ENCODE measurements at regions of chr19 and their contacts with region 1.

Region 1: DNA sequence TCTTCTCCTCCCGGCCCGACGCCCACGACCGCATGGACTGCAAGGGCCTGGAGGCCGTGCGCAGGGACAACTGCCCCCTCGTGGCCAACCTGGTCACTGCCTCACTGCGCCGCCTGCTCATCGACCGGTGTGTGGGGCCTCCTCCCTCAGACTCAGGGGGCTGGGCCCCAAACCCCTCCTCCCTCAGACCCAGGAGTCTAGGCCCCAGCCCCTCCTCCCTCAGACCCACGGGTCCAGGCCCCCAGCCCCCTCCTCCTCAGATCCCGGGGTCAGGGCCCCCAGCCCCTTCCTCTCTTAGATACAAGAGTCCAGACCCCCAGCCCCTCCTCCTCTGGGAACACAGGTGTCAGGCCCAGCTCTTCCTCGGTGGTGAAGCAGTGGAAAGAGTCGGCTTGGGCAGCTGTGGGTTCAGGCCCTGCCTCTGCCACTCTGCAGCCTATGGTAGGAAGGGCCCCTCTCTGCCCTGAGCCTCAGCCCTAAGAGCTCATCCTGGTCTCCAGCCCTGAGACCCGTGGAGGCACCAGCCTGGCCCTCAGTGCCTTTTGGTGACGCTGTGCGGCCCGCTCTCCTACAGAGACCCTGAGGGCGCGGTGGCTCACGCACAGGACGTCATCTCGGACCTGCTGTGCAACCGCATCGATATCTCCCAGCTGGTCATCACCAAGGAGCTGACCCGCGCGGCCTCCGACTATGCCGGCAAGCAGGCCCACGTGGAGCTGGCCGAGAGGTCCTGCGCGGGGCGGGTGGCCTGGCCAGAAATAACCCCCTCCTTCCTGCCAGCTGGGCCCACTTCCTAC is 3.7 kb upstream of the SPIB start:
- DNase-seq: peak; percentile 95
- ATAC-seq: peak; percentile 83
- H3K4me3 Mint-ChIP-seq: no peak overlapping the region
- H3K27ac Mint-ChIP-seq: no peak overlapping the region
- H3K4me1 Mint-ChIP-seq: peaks cover 18% of the 10 kb centered on the region
- H3K27me3 Mint-ChIP-seq: no peaks in the 10 kb centered on the region; the same call in 1 of the 2 replicates
- CTCF ChIP-seq: peak; percentile 93

Region 2: DNA sequence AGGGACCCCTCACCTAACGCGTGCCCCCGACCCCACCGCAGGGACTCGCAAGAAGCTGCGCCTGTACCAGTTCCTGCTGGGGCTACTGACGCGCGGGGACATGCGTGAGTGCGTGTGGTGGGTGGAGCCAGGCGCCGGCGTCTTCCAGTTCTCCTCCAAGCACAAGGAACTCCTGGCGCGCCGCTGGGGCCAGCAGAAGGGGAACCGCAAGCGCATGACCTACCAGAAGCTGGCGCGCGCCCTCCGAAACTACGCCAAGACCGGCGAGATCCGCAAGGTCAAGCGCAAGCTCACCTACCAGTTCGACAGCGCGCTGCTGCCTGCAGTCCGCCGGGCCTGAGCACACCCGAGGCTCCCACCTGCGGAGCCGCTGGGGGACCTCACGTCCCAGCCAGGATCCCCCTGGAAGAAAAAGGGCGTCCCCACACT is 12.9 kb after region 1 on chr19:
- CTCF ChIA-PET with region 1: interaction called, 16 read pairs
- POLR2A ChIA-PET with region 1: interaction called, 5 read pairs
- DNase-seq: peak; percentile 81
- ATAC-seq: peak; percentile 31
- H3K4me3 Mint-ChIP-seq: peak overlapping the region; percentile 47
- H3K27ac Mint-ChIP-seq: no peak overlapping the region
- H3K4me1 Mint-ChIP-seq: peaks cover 21% of the 10 kb centered on the region
- H3K27me3 Mint-ChIP-seq: peaks cover 35% of the 10 kb centered on the region
- CTCF ChIP-seq: no peak

Region 3: DNA sequence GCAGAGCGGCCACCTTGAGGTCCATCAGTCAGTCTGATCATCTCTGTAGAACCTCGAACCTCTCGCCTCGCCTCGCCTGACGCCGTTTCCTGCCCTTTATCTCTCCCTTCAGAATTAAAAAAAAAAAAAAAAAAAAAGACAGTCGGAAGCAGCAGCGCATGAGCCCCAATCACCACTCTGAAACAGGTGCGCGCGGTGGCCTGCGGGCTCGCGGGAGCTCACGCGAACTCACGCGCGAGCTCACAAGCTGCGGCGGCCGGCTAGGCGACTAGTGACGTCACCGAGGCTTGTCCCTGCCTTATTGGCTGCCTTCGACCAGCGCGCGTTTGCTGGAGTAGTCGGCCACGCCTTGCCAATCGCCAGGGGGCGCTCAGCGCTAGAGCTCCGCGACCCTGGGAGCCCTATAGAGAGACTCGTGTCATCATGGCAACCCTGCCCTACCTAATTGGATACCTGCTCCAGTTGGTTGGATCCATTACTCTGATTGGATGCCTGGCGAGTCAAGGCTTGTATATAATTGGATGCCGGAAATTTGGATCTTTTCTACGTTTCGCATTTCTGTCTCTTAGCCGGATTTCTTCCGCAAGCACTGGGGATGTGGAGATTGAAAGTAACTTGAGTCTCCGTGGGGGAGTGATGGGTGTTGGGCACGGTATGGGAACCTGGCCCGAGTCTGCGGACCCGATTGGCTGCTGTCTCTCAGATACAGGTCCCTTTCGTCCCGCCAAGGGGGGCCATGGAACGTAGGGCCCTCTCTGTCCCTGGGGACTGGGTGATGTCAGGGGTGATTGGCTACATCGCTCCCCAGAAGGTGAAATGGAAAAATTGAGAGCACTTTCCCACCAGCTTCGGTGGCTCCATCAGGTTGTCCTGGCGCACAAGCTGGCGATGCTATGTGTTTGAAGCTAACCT is 193.1 kb after region 1 on chr19:
- CTCF ChIA-PET with region 1: no interaction called
- POLR2A ChIA-PET with region 1: no interaction called
- DNase-seq: peak; percentile 100
- ATAC-seq: peak; percentile 84
- H3K4me3 Mint-ChIP-seq: peak overlapping the region; percentile 62
- H3K27ac Mint-ChIP-seq: peak overlapping the region; percentile 83
- H3K4me1 Mint-ChIP-seq: peaks cover 12% of the 10 kb centered on the region; the same call in 1 of the 2 replicates
- H3K27me3 Mint-ChIP-seq: peaks cover 74% of the 10 kb centered on the region
- CTCF ChIP-seq: peak; percentile 66